ENCODE measurements at regions of chr4 and their contacts with region 1.

Region 1: DNA sequence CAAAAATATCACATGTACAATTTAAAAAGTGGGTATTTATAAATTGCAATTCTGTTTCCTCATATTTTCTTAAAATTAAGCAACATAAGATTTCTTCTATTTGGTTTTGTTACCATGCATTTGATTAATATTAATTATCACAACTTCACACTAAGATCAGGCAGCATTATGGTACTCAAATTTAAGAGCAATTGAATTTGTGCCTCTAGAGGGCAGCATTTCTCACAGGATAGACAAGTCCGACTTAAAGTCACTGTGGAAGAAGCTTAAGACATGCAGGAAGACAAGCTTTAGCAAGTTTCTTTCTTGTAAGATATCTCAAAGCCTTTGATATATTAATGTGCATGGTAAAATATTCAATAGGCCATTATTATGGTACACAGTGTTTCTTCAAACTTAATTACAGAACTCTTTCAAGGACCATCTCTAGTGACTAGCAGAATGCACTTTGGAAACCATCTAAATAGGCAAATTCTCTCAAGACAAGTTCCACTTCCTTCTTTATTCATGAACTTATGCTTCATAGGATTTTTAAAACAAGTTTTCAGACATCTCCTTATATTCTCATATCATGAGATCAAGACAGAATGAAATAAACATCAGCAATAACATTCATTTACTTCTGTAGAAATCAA is 35.0 kb downstream of the FBXW7 start:
- DNase-seq: peak; percentile 83
- H3K4me3 ChIP-seq: no peak overlapping the region
- H3K27ac ChIP-seq: no peak overlapping the region
- H3K27me3 ChIP-seq: no peaks in the 10 kb centered on the region
- CTCF ChIP-seq: peak; percentile 80

Region 2: DNA sequence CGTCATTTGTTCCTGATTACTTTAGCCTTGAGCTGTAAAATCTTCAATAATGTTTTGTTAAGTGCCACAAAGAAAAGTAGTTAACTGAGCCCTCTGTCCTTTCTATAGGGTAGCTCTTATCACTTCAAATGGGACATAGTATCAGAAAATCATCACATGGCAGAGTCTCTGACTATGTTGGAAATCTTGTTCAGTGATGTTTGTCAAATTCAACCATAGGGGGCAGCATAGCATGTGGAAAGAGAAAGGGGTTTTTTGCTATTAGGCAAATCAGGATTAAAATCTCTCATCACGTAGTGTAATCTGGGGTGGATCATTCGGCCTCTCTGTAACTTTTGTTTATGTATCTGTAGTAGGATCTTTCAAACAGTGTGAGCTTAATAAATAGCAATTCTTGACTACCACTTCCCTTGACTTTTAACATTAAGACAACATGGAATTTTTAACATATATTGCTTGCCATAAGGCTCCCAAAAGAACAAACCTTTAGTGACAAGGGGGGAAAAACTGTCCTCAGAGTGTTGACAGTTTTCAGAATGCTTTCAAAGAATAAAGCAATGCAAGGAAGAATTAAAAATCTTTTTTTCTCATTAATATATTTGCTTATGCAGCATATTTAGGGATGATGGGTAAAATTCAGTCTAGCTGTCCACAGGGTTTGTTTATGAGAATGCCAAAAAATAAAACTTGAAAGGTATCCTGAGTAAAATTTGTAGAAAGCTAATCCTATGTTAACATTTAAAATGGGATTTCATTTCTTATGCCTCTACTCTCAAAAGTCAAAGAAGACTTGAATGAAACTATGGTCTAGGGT is 92.2 kb before region 1 on chr4:
- CTCF ChIA-PET with region 1: interaction called, 12 read pairs
- POLR2A ChIA-PET with region 1: no interaction called
- DNase-seq: no peak
- H3K4me3 ChIP-seq: no peak overlapping the region
- H3K27ac ChIP-seq: no peak overlapping the region
- H3K27me3 ChIP-seq: no peaks in the 10 kb centered on the region
- CTCF ChIP-seq: peak; percentile 68

Region 3: GRCh38 chr4:152471251-152471792 is 29.6 kb before region 1 on chr4:
- CTCF ChIA-PET with region 1: interaction called, 22 read pairs
- POLR2A ChIA-PET with region 1: no interaction called
- DNase-seq: no peak
- H3K4me3 ChIP-seq: no peak overlapping the region
- H3K27ac ChIP-seq: no peak overlapping the region
- H3K27me3 ChIP-seq: no peaks in the 10 kb centered on the region
- CTCF ChIP-seq: no peak

Region 4: GRCh38 chr4:152515678-152516077 is 14.8 kb after region 1 on chr4:
- CTCF ChIA-PET with region 1: interaction called, 39 read pairs
- POLR2A ChIA-PET with region 1: no interaction called
- DNase-seq: peak; percentile 10
- H3K4me3 ChIP-seq: no peak overlapping the region
- H3K27ac ChIP-seq: peak overlapping the region; percentile 69
- H3K27me3 ChIP-seq: no peaks in the 10 kb centered on the region
- CTCF ChIP-seq: no peak

Region 5: DNA sequence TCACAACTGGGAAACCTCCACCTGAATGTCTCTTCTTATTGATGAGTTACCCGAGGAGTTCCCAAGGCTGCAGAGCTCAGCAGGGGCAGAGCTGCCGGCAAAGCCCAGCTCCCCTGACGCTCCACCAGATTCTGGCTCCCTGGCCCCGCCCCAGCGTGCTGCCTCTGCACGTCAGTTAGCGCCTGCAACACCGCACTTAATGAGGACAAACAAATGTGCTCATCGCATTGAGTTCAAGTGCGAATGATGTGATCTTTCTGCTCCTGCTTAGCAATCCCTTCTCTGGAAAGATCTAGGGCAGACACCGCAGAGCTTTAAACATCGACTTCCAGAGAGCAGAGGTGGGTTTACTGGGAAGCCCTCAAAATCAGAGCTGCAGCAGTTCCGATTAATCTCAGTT is 90.5 kb after region 1 on chr4:
- CTCF ChIA-PET with region 1: interaction called, 19 read pairs
- POLR2A ChIA-PET with region 1: no interaction called
- DNase-seq: no peak
- H3K4me3 ChIP-seq: peak overlapping the region; percentile 30; the same call in 1 of the 2 replicates
- H3K27ac ChIP-seq: no peak overlapping the region
- H3K27me3 ChIP-seq: peaks cover 10% of the 10 kb centered on the region
- CTCF ChIP-seq: no peak

Region 6: GRCh38 chr4:153127760-153128494 is 627.0 kb after region 1 on chr4:
- CTCF ChIA-PET with region 1: interaction called, 11 read pairs
- POLR2A ChIA-PET with region 1: no interaction called
- DNase-seq: peak; percentile 65
- H3K4me3 ChIP-seq: no peak overlapping the region
- H3K27ac ChIP-seq: no peak overlapping the region
- H3K27me3 ChIP-seq: no peaks in the 10 kb centered on the region
- CTCF ChIP-seq: peak; percentile 84